Activated naive CD8-positive, alpha-beta T cell treated with anti-CD3 and anti-CD28 coated beads, Interleukin-2, amount 10 ng/mL, durations not matched to agents 7 days and 5 days (primary cell): ENCODE measurements at regions of chr22 and their contacts with region 1.

Region 1: DNA sequence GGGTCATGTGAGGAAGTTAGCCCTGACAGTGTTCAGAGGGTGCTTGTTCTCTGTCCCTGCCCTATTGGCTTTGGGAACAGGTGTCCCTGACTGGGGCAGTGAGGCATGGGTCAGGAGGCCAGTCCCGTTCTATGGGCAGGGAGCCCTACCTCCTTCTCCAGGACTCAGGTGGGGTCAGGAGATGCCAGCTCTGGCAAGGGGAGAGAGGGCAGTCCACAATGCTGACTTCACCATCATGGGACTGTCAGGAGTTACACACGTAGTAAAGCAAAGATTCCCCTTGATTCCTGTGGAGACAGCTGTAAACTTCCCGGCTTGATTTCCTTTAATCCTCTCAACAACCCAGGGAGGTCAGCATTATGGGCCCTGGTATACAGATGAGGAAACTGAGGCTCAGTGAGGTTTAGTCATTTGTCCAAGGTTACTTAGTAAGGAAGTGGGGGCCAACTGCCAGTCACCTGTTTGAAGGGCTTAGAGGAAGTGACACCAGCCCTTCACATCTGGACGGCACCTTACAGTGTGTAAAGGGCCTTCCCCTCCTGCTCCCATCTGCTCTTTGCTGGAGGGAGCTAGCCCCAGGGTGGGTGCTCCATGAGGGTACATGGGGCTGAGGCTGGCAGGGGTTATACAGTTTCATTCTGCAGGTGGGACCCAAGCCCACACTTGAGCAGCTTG is 11.9 kb downstream of the MICALL1 start:
- DNase-seq: no peak
- ATAC-seq: no peak
- H3K4me3 Mint-ChIP-seq: no peak overlapping the region
- H3K27ac Mint-ChIP-seq: peak overlapping the region; percentile 34
- H3K4me1 Mint-ChIP-seq: peaks cover 11% of the 10 kb centered on the region
- H3K27me3 Mint-ChIP-seq: no peaks in the 10 kb centered on the region

Region 2: DNA sequence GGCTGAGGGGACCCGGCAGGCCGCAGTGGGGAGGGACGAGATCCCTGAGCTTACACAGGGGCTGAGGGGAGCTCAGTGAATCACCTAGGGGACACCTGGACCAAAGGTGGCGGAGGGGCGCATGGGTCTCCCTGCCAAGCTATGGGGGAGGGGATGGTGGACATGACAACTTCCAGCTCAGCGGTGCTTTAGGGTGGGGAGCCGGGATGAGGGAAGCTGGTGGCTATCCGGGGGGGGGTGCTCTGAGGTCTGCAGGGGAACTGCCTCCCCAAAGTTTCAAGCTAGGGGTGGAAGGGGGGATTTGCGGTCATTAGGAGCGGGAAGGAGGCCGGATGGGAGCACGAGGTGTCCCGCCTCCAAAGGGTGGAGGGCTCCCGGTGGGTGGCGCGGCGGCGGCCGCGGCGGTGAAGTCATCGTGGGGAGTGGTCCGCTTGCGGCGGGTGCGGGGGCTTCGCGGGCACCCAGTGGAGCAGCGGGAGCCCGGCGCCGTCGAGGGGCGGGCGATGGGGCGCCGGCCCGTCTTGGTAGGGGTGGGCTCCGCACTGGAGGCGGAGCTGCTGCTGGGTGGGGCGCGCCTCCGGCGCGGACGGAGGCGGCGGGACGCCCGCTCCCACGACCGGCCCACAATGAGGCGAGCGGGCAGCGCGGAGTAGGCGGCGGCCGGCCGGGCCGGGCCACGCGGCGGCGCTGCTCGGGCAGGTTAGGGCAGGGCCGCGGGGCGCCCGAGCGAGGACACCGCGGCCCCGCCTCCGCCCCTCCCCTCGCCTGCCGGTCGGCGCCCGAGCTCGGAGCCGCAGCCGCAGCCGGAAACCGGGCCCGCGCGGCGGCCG is 12.3 kb before region 1 on chr22 and contains the start of gene MICALL1:
- POLR2A ChIA-PET with region 1: interaction called, 12 read pairs
- DNase-seq: peak; percentile 85
- ATAC-seq: peak; percentile 87
- H3K4me3 Mint-ChIP-seq: peak within 1 kb of the TSS; percentile 79
- H3K27ac Mint-ChIP-seq: peak within 1 kb of the TSS; percentile 87
- H3K4me1 Mint-ChIP-seq: peaks cover 27% of the 10 kb centered on the region
- H3K27me3 Mint-ChIP-seq: no peaks in the 10 kb centered on the region
- total RNA-seq, gene MICALL1: 27.9 to 31.3 TPM